HepG2 (cell line): ENCODE measurements at regions of chr17 and their contacts with region 1.

Region 1: DNA sequence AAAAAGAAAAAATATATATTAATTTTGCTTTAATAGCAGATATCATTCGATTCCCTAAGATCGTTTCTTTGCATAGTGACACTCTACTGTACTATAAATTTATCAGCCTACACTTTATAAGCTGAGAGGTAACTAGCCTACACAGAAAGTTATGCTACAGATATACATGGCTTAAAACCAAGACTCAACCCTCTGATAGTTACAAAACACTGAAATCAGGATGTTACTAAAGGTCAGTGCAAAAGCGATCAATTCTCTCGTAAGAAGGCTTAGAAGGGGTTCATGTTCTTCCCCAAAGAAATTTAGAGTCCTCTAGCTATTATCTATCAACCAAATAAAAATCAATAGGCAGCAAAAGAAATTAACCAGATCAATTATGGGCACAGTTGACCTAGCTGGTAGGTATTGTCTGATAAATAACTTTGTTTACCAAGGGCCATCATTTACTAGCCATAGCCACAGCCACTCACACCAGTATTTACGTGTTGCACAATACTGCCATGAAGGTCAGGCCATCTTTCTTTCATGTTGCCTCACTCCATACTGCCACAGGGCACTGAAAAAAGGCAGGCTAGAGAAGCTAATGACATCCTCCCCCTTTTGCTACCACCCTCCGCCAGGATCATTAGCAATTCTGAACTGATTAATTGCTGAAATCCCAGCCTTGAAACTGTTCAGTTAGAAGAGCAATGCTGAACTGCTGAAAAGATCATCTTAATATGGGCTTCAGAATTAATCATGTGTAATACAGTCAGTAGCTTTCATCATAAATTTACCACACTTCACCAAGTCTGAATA is 43.7 kb downstream of the RND2 start:
- DNase-seq: peak; percentile 90
- ATAC-seq: peak; percentile 99
- H3K4me3 ChIP-seq: peak overlapping the region in 2 of 3 experiments; percentile 19 to 21; a peak in 2 of 6 replicates
- H3K27ac ChIP-seq: peak overlapping the region; percentile 79
- H3K4me1 ChIP-seq: peaks cover 22% of the 10 kb centered on the region
- H3K27me3 ChIP-seq: no peaks in the 10 kb centered on the region
- CTCF ChIP-seq: peak; percentile 36
- EP300 ChIP-seq: peak; percentile 86 to 97
- POLR2A ChIP-seq: 0 out of 4 replicates have a peak, but pooled peaks of 1 of the 2 experiments have one; percentile 16
- RAD21 ChIP-seq: 0 out of 2 replicates have a peak, but pooled peaks have one; percentile 24

Region 2: GRCh38 chr17:42937712-42938596 is 130.8 kb before region 1 on chr17:
- CTCF ChIA-PET with region 1: no interaction called
- POLR2A ChIA-PET with region 1: no interaction called
- in situ Hi-C with region 1: no loop called
- intact Hi-C with region 1: no loop called
- DNase-seq: peak; percentile 73
- ATAC-seq: peak; percentile 88
- H3K4me3 ChIP-seq: no peak overlapping the region
- H3K27ac ChIP-seq: no peak overlapping the region
- H3K4me1 ChIP-seq: peaks cover 46% of the 10 kb centered on the region
- H3K27me3 ChIP-seq: no peaks in the 10 kb centered on the region; a peak in 2 of 5 replicates
- CTCF ChIP-seq: peak; percentile 93
- EP300 ChIP-seq: no peak
- POLR2A ChIP-seq: no peak
- RAD21 ChIP-seq: peak; percentile 96

Region 3: GRCh38 chr17:43040655-43041054 is 28.1 kb before region 1 on chr17:
- CTCF ChIA-PET with region 1: no interaction called
- POLR2A ChIA-PET with region 1: interaction called, 10 read pairs
- in situ Hi-C with region 1: no loop called
- intact Hi-C with region 1: no loop called
- DNase-seq: peak; percentile 81
- ATAC-seq: peak; percentile 94
- H3K4me3 ChIP-seq: no peak overlapping the region
- H3K27ac ChIP-seq: peak overlapping the region; percentile 36
- H3K4me1 ChIP-seq: peaks cover 42% of the 10 kb centered on the region
- H3K27me3 ChIP-seq: no peaks in the 10 kb centered on the region
- CTCF ChIP-seq: no peak
- EP300 ChIP-seq: peak; percentile 36 to 72; a peak in 1 of 4 replicates
- POLR2A ChIP-seq: no peak
- RAD21 ChIP-seq: no peak

Region 4: GRCh38 chr17:43085474-43085873 is 16.7 kb after region 1 on chr17:
- CTCF ChIA-PET with region 1: no interaction called
- POLR2A ChIA-PET with region 1: interaction called, 11 read pairs
- in situ Hi-C with region 1: no loop called
- intact Hi-C with region 1: no loop called
- DNase-seq: peak; percentile 9
- ATAC-seq: no peak
- H3K4me3 ChIP-seq: no peak overlapping the region
- H3K27ac ChIP-seq: no peak overlapping the region
- H3K4me1 ChIP-seq: no peaks in the 10 kb centered on the region
- H3K27me3 ChIP-seq: no peaks in the 10 kb centered on the region
- CTCF ChIP-seq: no peak
- EP300 ChIP-seq: no peak
- POLR2A ChIP-seq: no peak
- RAD21 ChIP-seq: no peak

Region 5: GRCh38 chr17:43118679-43119615 is 50.2 kb after region 1 on chr17:
- CTCF ChIA-PET with region 1: no interaction called
- POLR2A ChIA-PET with region 1: interaction called, 13 read pairs
- in situ Hi-C with region 1: no loop called
- intact Hi-C with region 1: loop called (anchors 10 kb)
- DNase-seq: peak; percentile 65
- ATAC-seq: peak; percentile 68
- H3K4me3 ChIP-seq: no peak overlapping the region
- H3K27ac ChIP-seq: peak overlapping the region; percentile 42
- H3K4me1 ChIP-seq: peaks cover 68% of the 10 kb centered on the region
- H3K27me3 ChIP-seq: no peaks in the 10 kb centered on the region
- CTCF ChIP-seq: no peak
- EP300 ChIP-seq: no peak
- POLR2A ChIP-seq: no peak
- RAD21 ChIP-seq: no peak

Region 6: DNA sequence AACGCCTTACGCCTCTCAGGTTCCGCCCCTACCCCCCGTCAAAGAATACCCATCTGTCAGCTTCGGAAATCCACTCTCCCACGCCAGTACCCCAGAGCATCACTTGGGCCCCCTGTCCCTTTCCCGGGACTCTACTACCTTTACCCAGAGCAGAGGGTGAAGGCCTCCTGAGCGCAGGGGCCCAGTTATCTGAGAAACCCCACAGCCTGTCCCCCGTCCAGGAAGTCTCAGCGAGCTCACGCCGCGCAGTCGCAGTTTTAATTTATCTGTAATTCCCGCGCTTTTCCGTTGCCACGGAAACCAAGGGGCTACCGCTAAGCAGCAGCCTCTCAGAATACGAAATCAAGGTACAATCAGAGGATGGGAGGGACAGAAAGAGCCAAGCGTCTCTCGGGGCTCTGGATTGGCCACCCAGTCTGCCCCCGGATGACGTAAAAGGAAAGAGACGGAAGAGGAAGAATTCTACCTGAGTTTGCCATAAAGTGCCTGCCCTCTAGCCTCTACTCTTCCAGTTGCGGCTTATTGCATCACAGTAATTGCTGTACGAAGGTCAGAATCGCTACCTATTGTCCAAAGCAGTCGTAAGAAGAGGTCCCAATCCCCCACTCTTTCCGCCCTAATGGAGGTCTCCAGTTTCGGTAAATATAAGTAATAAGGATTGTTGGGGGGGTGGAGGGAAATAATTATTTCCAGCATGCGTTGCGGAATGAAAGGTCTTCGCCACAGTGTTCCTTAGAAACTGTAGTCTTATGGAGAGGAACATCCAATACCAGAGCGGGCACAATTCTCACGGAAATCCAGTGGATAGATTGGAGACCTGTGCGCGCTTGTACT is 56.6 kb after region 1 on chr17 and contains the start of gene BRCA1:
- CTCF ChIA-PET with region 1: no interaction called
- POLR2A ChIA-PET with region 1: interaction called, 19 read pairs
- in situ Hi-C with region 1: no loop called
- intact Hi-C with region 1: no loop called
- DNase-seq: peak; percentile 100
- ATAC-seq: peak; percentile 91
- H3K4me3 ChIP-seq: peak within 1 kb of the TSS; percentile 87 to 94 (median 91)
- H3K27ac ChIP-seq: peak within 1 kb of the TSS; percentile 95
- H3K4me1 ChIP-seq: peaks cover 53% of the 10 kb centered on the region
- H3K27me3 ChIP-seq: no peaks in the 10 kb centered on the region; a peak in 1 of 5 replicates
- CTCF ChIP-seq: peak; percentile 23; the same call in 1 of the 2 replicates
- EP300 ChIP-seq: peak; percentile 45 to 73; a peak in 2 of 4 replicates
- POLR2A ChIP-seq: peak; percentile 76 to 97
- RAD21 ChIP-seq: peak; percentile 55; the same call in 1 of the 2 replicates
- total RNA-seq, gene BRCA1: 37.5 and 56.0 TPM in 2 replicates